CD8-positive, alpha-beta T cell (primary cell): ENCODE measurements at regions of chr1 and their contacts with region 1.

Region 1: DNA sequence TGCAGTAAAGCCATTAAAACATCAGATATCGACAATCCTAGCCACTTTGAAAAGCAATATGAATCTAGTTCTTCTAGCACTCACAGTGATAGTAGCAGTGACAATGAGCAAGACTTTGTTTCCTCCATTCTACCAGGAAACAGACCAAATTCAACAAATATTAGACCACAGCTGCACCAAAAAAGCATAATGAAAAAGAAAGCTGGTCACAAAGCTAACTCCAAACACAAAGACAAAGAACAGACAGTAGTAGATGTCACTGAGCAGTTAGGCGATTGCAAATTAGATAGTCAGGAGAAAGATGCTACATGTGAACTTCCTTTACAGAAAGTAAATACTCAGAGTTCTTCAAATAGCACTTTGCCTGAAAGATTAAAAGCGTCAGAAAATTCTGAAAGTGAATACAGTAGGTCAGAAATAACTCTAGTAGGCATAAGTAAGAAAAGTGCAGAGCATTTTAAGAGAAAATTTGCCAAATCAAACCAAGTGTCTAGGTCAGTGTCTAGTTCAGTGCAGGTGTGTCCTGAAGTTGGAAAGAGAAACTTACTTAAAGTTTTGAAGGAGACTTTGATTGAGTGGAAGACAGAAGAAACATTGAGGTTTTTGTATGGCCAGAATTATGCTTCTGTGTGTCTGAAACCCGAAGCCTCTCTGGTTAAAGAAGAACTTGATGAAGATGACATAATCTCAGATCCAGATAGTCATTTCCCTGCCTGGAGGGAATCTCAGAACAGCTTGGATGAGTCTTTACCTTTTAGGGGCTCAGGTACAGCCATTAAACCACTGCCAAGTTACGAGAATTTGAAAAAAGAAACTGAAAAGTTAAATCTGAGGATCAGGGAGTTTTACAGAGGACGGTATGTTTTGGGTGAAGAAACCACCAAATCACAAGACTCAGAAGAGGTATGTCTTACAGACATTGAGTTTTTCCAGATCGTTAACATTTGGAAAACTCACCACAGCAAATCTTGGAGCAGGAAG is 24.9 kb downstream of the RPAP2 start:
- DNase-seq: peak in 1 of 9 experiments; percentile 17
- ATAC-seq: no peak
- H3K4me3 ChIP-seq: no peak overlapping the region
- H3K4me3 Mint-ChIP-seq: peak overlapping the region; percentile 69
- H3K27ac ChIP-seq: peak overlapping the region in 1 of 2 experiments; percentile 50
- H3K27ac Mint-ChIP-seq: peak overlapping the region; percentile 90
- H3K4me1 ChIP-seq: peaks cover 9% of the 10 kb centered on the region
- H3K4me1 Mint-ChIP-seq: peaks cover 26% of the 10 kb centered on the region
- H3K27me3 ChIP-seq: no peaks in the 10 kb centered on the region
- H3K27me3 Mint-ChIP-seq: no peaks in the 10 kb centered on the region
- CTCF ChIP-seq: no peak

Region 2: GRCh38 chr1:92343061-92343460 is 19.3 kb after region 1 on chr1:
- CTCF ChIA-PET with region 1: no interaction called
- POLR2A ChIA-PET with region 1: no interaction called
- intact Hi-C with region 1: loop called in 1 of 2 experiments (anchors 2 kb)
- DNase-seq: no peak
- ATAC-seq: no peak
- H3K4me3 ChIP-seq: no peak overlapping the region
- H3K4me3 Mint-ChIP-seq: no peak overlapping the region
- H3K27ac ChIP-seq: no peak overlapping the region
- H3K27ac Mint-ChIP-seq: no peak overlapping the region
- H3K4me1 ChIP-seq: no peaks in the 10 kb centered on the region
- H3K4me1 Mint-ChIP-seq: peaks cover under 1% of the 10 kb centered on the region
- H3K27me3 ChIP-seq: no peaks in the 10 kb centered on the region
- H3K27me3 Mint-ChIP-seq: no peaks in the 10 kb centered on the region
- CTCF ChIP-seq: no peak